ENCODE measurements at regions of chr13 and their contacts with region 1.

Region 1: GRCh38 chr13:99269627-99270241 is 11.6 kb upstream of the GPR18 start:
- DNase-seq: peak; percentile 44
- H3K4me3 Mint-ChIP-seq: no peak overlapping the region
- H3K27ac Mint-ChIP-seq: peak overlapping the region; percentile 16
- H3K4me1 Mint-ChIP-seq: peaks cover 69% of the 10 kb centered on the region
- H3K27me3 Mint-ChIP-seq: no peaks in the 10 kb centered on the region

Region 2: DNA sequence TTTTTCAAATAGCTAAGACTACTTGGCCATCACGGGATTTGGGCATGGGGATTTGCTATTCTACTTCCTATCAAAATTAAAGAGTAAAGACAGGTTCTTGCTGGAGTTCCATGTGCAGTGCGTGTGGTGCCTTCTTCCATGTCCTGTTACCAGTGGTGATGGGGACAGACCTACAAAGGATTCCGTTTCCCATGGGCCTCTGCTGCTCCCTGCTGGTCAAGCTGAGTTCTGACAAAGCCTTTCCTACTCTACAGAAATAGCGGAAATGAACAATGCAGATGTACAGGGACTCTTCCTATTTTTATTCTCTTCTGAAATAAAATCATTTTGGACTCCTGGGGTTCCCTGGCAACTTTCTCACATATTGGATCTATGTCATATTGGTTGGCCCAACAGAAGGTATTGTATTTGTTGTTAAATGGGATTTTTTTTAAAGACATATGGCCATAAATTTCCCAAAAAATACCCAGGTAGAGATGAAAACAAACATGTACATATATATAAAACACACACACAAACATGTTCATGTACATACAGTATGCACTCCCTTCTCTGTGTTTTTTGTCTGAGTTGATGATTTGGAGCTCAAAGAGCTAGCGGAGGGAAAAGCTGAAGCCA is 426.8 kb before region 1 on chr13:
- CTCF ChIA-PET with region 1: interaction called, 4 read pairs
- intact Hi-C with region 1: loop called (anchors 5 kb)
- DNase-seq: peak; percentile 85
- H3K4me3 Mint-ChIP-seq: no peak overlapping the region
- H3K27ac Mint-ChIP-seq: no peak overlapping the region
- H3K4me1 Mint-ChIP-seq: peaks cover 6% of the 10 kb centered on the region
- H3K27me3 Mint-ChIP-seq: no peaks in the 10 kb centered on the region

Region 3: GRCh38 chr13:98977568-98978265 is 292.0 kb before region 1 on chr13 and contains the start of gene DOCK9:
- CTCF ChIA-PET with region 1: no interaction called
- intact Hi-C with region 1: no loop called
- DNase-seq: no peak
- H3K4me3 Mint-ChIP-seq: no peak within 1 kb of the TSS
- H3K27ac Mint-ChIP-seq: no peak within 1 kb of the TSS
- H3K4me1 Mint-ChIP-seq: peaks cover 82% of the 10 kb centered on the region
- H3K27me3 Mint-ChIP-seq: no peaks in the 10 kb centered on the region
- total RNA-seq, gene DOCK9: 38.3 to 42.1 TPM

Region 4: GRCh38 chr13:99176309-99177276 is 93.1 kb before region 1 on chr13:
- CTCF ChIA-PET with region 1: interaction called, 226 read pairs
- intact Hi-C with region 1: loop called (anchors 1 kb)
- DNase-seq: peak; percentile 87
- H3K4me3 Mint-ChIP-seq: peak overlapping the region; percentile 48
- H3K27ac Mint-ChIP-seq: no peak overlapping the region
- H3K4me1 Mint-ChIP-seq: peaks cover 35% of the 10 kb centered on the region
- H3K27me3 Mint-ChIP-seq: no peaks in the 10 kb centered on the region

Region 5: DNA sequence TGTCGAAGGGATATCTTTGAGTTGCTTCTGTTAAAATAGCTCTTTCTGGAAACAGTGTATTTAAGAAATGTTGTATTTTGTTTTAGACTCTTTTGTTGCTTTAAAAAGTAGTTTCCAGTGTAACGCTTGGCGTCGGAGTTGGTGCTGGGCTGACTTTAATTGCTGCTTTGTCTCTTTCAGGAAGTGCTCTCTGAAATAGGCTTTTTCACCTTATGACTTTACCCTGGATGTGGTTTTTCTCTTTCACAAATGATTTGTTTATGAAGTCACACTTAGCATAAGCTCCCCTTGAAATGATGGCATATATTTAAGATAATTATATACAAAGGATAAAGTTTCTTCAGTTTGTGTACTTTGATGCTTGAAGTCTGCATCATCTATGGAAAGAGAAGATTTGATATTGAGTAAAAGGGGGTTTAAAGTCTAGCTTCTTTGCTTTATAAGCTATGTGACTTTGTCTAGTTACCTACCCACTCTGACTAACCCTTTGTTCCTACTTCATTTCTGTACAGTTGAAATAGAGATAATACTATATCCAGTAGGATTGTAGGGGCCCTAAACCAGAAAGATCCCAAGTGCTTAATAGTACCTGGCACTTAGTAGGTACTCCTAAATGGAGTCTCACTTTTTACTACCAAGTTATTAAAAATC is 11.4 kb before region 1 on chr13 and contains the start of gene GPR18:
- CTCF ChIA-PET with region 1: interaction called, 13 read pairs
- intact Hi-C with region 1: no loop called
- DNase-seq: peak; percentile 61
- H3K4me3 Mint-ChIP-seq: peak within 1 kb of the TSS; percentile 81
- H3K27ac Mint-ChIP-seq: peak within 1 kb of the TSS; percentile 91
- H3K4me1 Mint-ChIP-seq: peaks cover 72% of the 10 kb centered on the region
- H3K27me3 Mint-ChIP-seq: no peaks in the 10 kb centered on the region
- total RNA-seq, gene GPR18: 2.4 TPM

Region 6: GRCh38 chr13:99322297-99323103 is 52.8 kb after region 1 on chr13:
- CTCF ChIA-PET with region 1: interaction called, 11 read pairs
- intact Hi-C with region 1: loop called (anchors 1 kb)
- DNase-seq: peak; percentile 63
- H3K4me3 Mint-ChIP-seq: peak overlapping the region; percentile 56
- H3K27ac Mint-ChIP-seq: peak overlapping the region; percentile 87
- H3K4me1 Mint-ChIP-seq: peaks cover 75% of the 10 kb centered on the region
- H3K27me3 Mint-ChIP-seq: no peaks in the 10 kb centered on the region

Region 7: DNA sequence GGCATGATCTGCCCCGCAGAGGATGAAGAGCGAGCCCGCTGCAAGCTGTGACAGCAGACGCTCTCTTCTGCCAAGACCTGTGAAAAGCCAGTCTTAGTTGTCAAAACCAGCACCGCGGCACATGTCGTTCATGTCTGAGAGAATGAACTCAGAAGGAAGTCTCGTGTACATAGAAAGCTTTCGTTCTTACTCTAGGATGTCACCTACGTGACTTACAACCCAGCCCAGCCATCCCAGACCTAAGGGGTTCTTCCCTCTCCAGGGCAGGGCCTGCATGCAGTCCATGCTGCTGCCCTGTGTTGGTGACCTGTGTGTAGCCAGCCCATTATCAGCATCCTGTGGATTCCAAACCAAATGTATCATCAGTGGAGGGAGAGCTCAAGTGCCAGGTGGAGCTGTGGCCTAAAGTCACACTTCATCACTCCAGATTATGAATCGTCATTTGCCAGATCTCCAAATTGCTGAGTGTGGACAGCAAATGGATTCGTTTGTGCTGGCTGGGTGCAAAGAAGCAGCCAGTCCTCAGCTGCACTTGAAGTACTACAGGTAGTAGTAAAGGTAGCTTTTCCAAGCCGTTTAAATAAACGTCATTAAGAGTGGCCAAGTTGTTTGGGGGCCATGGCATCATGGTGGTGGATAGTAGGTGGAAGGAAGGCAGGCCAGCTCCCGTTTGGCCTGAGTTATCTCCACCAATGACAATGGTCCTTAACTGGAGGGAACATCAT is 111.3 kb after region 1 on chr13:
- CTCF ChIA-PET with region 1: interaction called, 175 read pairs
- intact Hi-C with region 1: loop called (anchors 1 kb)
- DNase-seq: peak; percentile 91
- H3K4me3 Mint-ChIP-seq: no peak overlapping the region
- H3K27ac Mint-ChIP-seq: peak overlapping the region; percentile 79
- H3K4me1 Mint-ChIP-seq: peaks cover 84% of the 10 kb centered on the region
- H3K27me3 Mint-ChIP-seq: no peaks in the 10 kb centered on the region

Measured in activated naive CD4-positive, alpha-beta T cell treated with anti-CD3 and anti-CD28 coated beads for 36 hours (primary cell).